ENCODE measurements at regions of chr19 and their contacts with region 1.

Region 1: GRCh38 chr19:10717356-10718204 is at the start of gene DNM2:
- DNase-seq: peak; percentile 100
- ATAC-seq: peak; percentile 93
- H3K4me3 ChIP-seq: peak within 1 kb of the TSS; percentile 81
- H3K27ac ChIP-seq: peak within 1 kb of the TSS; percentile 92
- H3K4me1 ChIP-seq: peaks cover 11% of the 10 kb centered on the region
- H3K27me3 ChIP-seq: no peaks in the 10 kb centered on the region
- CTCF ChIP-seq: peak; percentile 69 to 96 (median 89)
- EP300 ChIP-seq: no peak
- POLR2A ChIP-seq: peak; percentile 94
- RAD21 ChIP-seq: peak; percentile 79
- polyA plus RNA-seq, gene DNM2: 1.2 to 3.4 TPM

Region 2: GRCh38 chr19:9865732-9866501 is 851.7 kb before region 1 on chr19:
- CTCF ChIA-PET with region 1: no interaction called
- POLR2A ChIA-PET with region 1: no interaction called
- RAD21 ChIA-PET with region 1: no interaction called
- SMC1A ChIA-PET with region 1: no interaction called
- in situ Hi-C with region 1: no loop called
- intact Hi-C with region 1: no loop called
- DNase-seq: no peak
- ATAC-seq: peak; percentile 46
- H3K4me3 ChIP-seq: no peak overlapping the region
- H3K27ac ChIP-seq: no peak overlapping the region
- H3K4me1 ChIP-seq: no peaks in the 10 kb centered on the region
- H3K27me3 ChIP-seq: no peaks in the 10 kb centered on the region
- CTCF ChIP-seq: no peak
- EP300 ChIP-seq: no peak
- POLR2A ChIP-seq: no peak
- RAD21 ChIP-seq: no peak

Region 3: GRCh38 chr19:10701955-10702525 is 15.5 kb before region 1 on chr19:
- CTCF ChIA-PET with region 1: interaction called, 45 read pairs
- POLR2A ChIA-PET with region 1: interaction called, 15 read pairs
- RAD21 ChIA-PET with region 1: interaction called, 15 read pairs
- SMC1A ChIA-PET with region 1: interaction called, 39 read pairs
- in situ Hi-C with region 1: no loop called
- intact Hi-C with region 1: no loop called
- DNase-seq: no peak
- ATAC-seq: peak; percentile 62
- H3K4me3 ChIP-seq: peak overlapping the region; percentile 87
- H3K27ac ChIP-seq: peak overlapping the region; percentile 73
- H3K4me1 ChIP-seq: no peaks in the 10 kb centered on the region
- H3K27me3 ChIP-seq: no peaks in the 10 kb centered on the region
- CTCF ChIP-seq: peak in 2 of 3 experiments; percentile 28 to 41; a peak in 2 of 6 replicates
- EP300 ChIP-seq: no peak
- POLR2A ChIP-seq: no peak
- RAD21 ChIP-seq: peak; percentile 13; the same call in 1 of the 2 replicates

Region 4: GRCh38 chr19:10760273-10760944 is 42.8 kb after region 1 on chr19:
- CTCF ChIA-PET with region 1: interaction called, 36 read pairs
- POLR2A ChIA-PET with region 1: interaction called, 20 read pairs
- RAD21 ChIA-PET with region 1: interaction called, 23 read pairs
- SMC1A ChIA-PET with region 1: interaction called, 27 read pairs
- in situ Hi-C with region 1: no loop called
- intact Hi-C with region 1: loop called (anchors 1 kb)
- DNase-seq: no peak
- ATAC-seq: peak; percentile 57
- H3K4me3 ChIP-seq: peak overlapping the region; percentile 57; the same call in 1 of the 2 replicates
- H3K27ac ChIP-seq: peak overlapping the region; percentile 82
- H3K4me1 ChIP-seq: peaks cover 15% of the 10 kb centered on the region
- H3K27me3 ChIP-seq: no peaks in the 10 kb centered on the region
- CTCF ChIP-seq: no peak
- EP300 ChIP-seq: no peak
- POLR2A ChIP-seq: no peak
- RAD21 ChIP-seq: no peak

Region 5: GRCh38 chr19:10797541-10798256 is 80.1 kb after region 1 on chr19:
- CTCF ChIA-PET with region 1: interaction called, 3 read pairs
- POLR2A ChIA-PET with region 1: no interaction called
- RAD21 ChIA-PET with region 1: interaction called, 11 read pairs
- SMC1A ChIA-PET with region 1: interaction called, 4 read pairs
- in situ Hi-C with region 1: no loop called
- intact Hi-C with region 1: no loop called
- DNase-seq: peak; percentile 74
- ATAC-seq: peak; percentile 95
- H3K4me3 ChIP-seq: no peak overlapping the region
- H3K27ac ChIP-seq: peak overlapping the region; percentile 46; the same call in 1 of the 2 replicates
- H3K4me1 ChIP-seq: peaks cover 3% of the 10 kb centered on the region
- H3K27me3 ChIP-seq: no peaks in the 10 kb centered on the region
- CTCF ChIP-seq: no peak
- EP300 ChIP-seq: peak; percentile 25 to 49; a peak in 2 of 4 replicates
- POLR2A ChIP-seq: no peak
- RAD21 ChIP-seq: no peak

Region 6: GRCh38 chr19:10835754-10836477 is 118.3 kb after region 1 on chr19 and contains the start of gene TMED1:
- CTCF ChIA-PET with region 1: interaction called, 28 read pairs
- POLR2A ChIA-PET with region 1: interaction called, 10 read pairs
- RAD21 ChIA-PET with region 1: interaction called, 41 read pairs
- SMC1A ChIA-PET with region 1: interaction called, 15 read pairs
- in situ Hi-C with region 1: no loop called
- intact Hi-C with region 1: loop called (anchors 1 kb)
- DNase-seq: peak; percentile 91
- ATAC-seq: peak; percentile 98
- H3K4me3 ChIP-seq: peak within 1 kb of the TSS; percentile 78
- H3K27ac ChIP-seq: peak within 1 kb of the TSS; percentile 89
- H3K4me1 ChIP-seq: peaks cover 12% of the 10 kb centered on the region
- H3K27me3 ChIP-seq: no peaks in the 10 kb centered on the region
- CTCF ChIP-seq: peak in 1 of 3 experiments; percentile 42; a peak in 1 of 6 replicates
- EP300 ChIP-seq: no peak
- POLR2A ChIP-seq: peak; percentile 86
- RAD21 ChIP-seq: no peak
- polyA plus RNA-seq, gene TMED1: 0.60 to 2.8 TPM

Region 7: DNA sequence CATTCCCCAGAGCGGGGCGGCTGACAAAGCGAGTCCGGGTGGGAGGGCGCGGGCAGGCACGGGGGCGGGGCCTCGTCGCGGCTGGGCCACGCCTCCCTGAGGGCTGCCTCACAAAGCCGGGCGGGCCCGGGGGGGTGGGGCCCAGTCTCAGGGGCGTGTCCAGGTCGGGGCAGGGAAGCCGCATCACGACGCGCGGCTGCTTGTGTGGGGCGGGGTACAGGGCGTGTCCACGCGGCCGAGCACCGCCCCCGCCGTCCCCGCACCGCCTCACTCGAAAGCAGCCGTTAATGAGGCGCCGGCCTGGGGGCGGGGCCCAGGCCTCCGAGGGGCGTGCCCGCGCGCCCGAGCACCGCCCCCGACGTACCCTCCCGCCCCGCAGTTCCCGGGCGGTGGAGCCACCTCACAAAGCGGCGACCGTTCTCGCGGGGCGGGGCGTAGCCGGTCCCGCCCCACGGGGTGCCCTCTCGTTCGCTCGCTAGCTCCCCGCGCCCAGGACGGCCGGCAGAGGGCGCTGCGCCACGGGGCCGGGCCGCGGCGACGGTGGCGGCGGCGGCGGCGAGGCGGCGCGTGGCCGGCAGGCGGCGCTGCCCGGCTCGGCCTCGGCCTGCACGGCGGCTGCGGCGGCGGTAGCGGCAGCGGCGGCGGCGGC is 153.5 kb after region 1 on chr19 and contains the start of gene CARM1:
- CTCF ChIA-PET with region 1: interaction called, 211 read pairs
- POLR2A ChIA-PET with region 1: interaction called, 34 read pairs
- RAD21 ChIA-PET with region 1: interaction called, 102 read pairs
- SMC1A ChIA-PET with region 1: interaction called, 102 read pairs
- in situ Hi-C with region 1: no loop called
- intact Hi-C with region 1: no loop called
- DNase-seq: peak; percentile 79
- ATAC-seq: peak; percentile 84
- H3K4me3 ChIP-seq: peak within 1 kb of the TSS; percentile 68
- H3K27ac ChIP-seq: peak within 1 kb of the TSS; percentile 90
- H3K4me1 ChIP-seq: peaks cover 33% of the 10 kb centered on the region
- H3K27me3 ChIP-seq: no peaks in the 10 kb centered on the region
- CTCF ChIP-seq: peak; percentile 55 to 90 (median 66)
- EP300 ChIP-seq: no peak
- POLR2A ChIP-seq: no peak
- RAD21 ChIP-seq: peak; percentile 72
- polyA plus RNA-seq, gene CARM1: 0.45 to 0.49 TPM

Region 8: GRCh38 chr19:10915130-10916091 is 197.8 kb after region 1 on chr19:
- CTCF ChIA-PET with region 1: no interaction called
- POLR2A ChIA-PET with region 1: no interaction called
- RAD21 ChIA-PET with region 1: no interaction called
- SMC1A ChIA-PET with region 1: no interaction called
- in situ Hi-C with region 1: no loop called
- intact Hi-C with region 1: no loop called
- DNase-seq: no peak
- ATAC-seq: no peak
- H3K4me3 ChIP-seq: no peak overlapping the region
- H3K27ac ChIP-seq: no peak overlapping the region
- H3K4me1 ChIP-seq: no peaks in the 10 kb centered on the region
- H3K27me3 ChIP-seq: no peaks in the 10 kb centered on the region
- CTCF ChIP-seq: no peak
- EP300 ChIP-seq: no peak
- POLR2A ChIP-seq: no peak; the same call in 1 of the 2 replicates
- RAD21 ChIP-seq: no peak